Head of caudate nucleus (tissue), 42 donors: ENCODE measurements at regions of chr6 and their contacts with region 1.

Region 1: DNA sequence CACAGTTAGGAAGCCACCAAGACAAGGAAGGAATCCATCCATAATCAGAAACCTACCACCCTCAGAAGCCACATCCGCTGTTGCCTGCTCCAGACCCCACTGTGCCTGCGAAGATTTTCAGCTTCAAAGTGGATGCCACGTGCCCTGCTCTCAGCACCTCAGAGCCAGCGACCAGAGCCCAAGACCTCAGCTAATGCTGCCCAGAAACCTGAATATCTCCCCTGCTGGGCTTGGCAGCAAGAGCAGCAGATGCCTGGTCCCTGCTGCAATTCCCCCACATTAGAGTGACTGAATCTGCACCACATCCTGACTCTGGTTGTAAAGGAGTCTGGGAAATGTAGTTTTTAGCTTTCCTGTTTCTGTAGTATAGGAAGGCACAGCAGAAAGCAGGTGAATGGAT is 10.7 kb upstream of the ULBP3 start:
- DNase-seq: no peak

Region 2: GRCh38 chr6:150238336-150238741 is 158.7 kb after region 1 on chr6:
- intact Hi-C with region 1: no loop called
- DNase-seq: no peak

Region 3: GRCh38 chr6:150325066-150325772 is 245.6 kb after region 1 on chr6:
- intact Hi-C with region 1: loop called (anchors 5 kb)
- DNase-seq: no peak

Region 4: GRCh38 chr6:150395398-150396009 is 315.9 kb after region 1 on chr6:
- intact Hi-C with region 1: loop called (anchors 10 kb)
- DNase-seq: peak; percentile 17 to 85 (median 64)